B cell (primary cell): ENCODE measurements at regions of chr6 and their contacts with region 1.

Region 1: GRCh38 chr6:109187399-109188114 is 92.2 kb downstream of the CEP57L1 start:
- DNase-seq: peak; percentile 71
- ATAC-seq: peak; percentile 82
- H3K4me3 ChIP-seq: no peak overlapping the region
- H3K4me3 Mint-ChIP-seq: no peak overlapping the region
- H3K27ac ChIP-seq: no peak overlapping the region
- H3K27ac Mint-ChIP-seq: no peak overlapping the region
- H3K4me1 ChIP-seq: peaks cover 8 to 16% of the 10 kb centered on the region in 2 donors
- H3K4me1 Mint-ChIP-seq: peaks cover 9% of the 10 kb centered on the region
- H3K27me3 ChIP-seq: peaks cover 0 to 4% (median 0%) of the 10 kb centered on the region in 4 experiments
- H3K27me3 Mint-ChIP-seq: peaks cover 11% of the 10 kb centered on the region
- CTCF ChIP-seq: peak; percentile 97

Region 2: DNA sequence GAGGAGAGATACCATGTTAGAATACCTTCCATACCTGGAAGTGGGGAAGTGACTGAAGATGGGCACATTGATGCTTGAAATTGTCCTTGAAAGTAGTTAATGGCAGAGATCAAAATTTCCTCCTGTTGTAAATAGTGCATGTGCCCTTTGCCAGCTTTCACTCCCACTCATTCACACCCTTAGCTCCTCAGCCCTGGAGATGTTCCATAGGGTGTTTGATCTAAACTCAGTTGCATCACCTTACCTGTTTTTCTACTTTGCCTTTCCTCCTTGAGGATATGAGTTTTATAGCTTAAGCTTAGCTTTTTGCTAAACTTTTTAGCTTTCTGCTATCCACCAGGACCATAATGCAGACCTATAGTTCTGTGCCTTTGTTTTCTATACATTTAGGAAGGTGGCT is 23.2 kb before region 1 on chr6:
- CTCF ChIA-PET with region 1: interaction called, 12 read pairs
- POLR2A ChIA-PET with region 1: no interaction called
- intact Hi-C with region 1: no loop called
- DNase-seq: no peak
- ATAC-seq: no peak
- H3K4me3 ChIP-seq: no peak overlapping the region
- H3K4me3 Mint-ChIP-seq: no peak overlapping the region
- H3K27ac ChIP-seq: no peak overlapping the region
- H3K27ac Mint-ChIP-seq: no peak overlapping the region
- H3K4me1 ChIP-seq: no peaks in the 10 kb centered on the region
- H3K4me1 Mint-ChIP-seq: no peaks in the 10 kb centered on the region
- H3K27me3 ChIP-seq: no peaks in the 10 kb centered on the region
- H3K27me3 Mint-ChIP-seq: no peaks in the 10 kb centered on the region
- CTCF ChIP-seq: no peak

Region 3: GRCh38 chr6:109526905-109527628 is 339.5 kb after region 1 on chr6:
- CTCF ChIA-PET with region 1: no interaction called
- POLR2A ChIA-PET with region 1: no interaction called
- intact Hi-C with region 1: loop called (anchors 2 kb)
- DNase-seq: peak; percentile 74
- ATAC-seq: peak; percentile 66
- H3K4me3 ChIP-seq: no peak overlapping the region
- H3K4me3 Mint-ChIP-seq: no peak overlapping the region
- H3K27ac ChIP-seq: no peak overlapping the region
- H3K27ac Mint-ChIP-seq: no peak overlapping the region
- H3K4me1 ChIP-seq: peaks cover 0 to 3% of the 10 kb centered on the region in 2 donors
- H3K4me1 Mint-ChIP-seq: peaks cover 4% of the 10 kb centered on the region
- H3K27me3 ChIP-seq: no peaks in the 10 kb centered on the region
- H3K27me3 Mint-ChIP-seq: no peaks in the 10 kb centered on the region
- CTCF ChIP-seq: peak; percentile 74

Region 4: DNA sequence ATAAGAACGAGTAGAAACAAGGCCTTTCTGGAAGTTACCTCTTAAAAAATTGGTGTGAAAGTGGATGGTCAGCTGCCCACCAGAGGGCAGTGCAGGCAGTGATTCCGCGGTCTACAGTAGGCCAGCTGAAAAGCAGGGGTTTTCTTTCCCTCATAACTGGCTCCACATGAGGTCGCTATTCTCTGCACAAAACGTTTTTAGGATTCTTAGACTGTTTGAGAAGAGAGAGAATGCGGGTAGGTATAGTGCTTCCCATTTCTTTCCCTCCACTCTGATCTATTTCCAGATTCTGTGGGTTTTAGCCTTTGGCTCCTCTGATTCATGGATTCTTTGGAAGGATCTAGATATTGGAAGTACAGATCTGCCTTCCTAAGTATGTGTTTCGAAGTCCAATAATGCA is 517.7 kb after region 1 on chr6:
- CTCF ChIA-PET with region 1: interaction called, 12 read pairs
- POLR2A ChIA-PET with region 1: no interaction called
- intact Hi-C with region 1: loop called (anchors 5 kb)
- DNase-seq: peak; percentile 89
- ATAC-seq: peak; percentile 99
- H3K4me3 ChIP-seq: no peak overlapping the region
- H3K4me3 Mint-ChIP-seq: no peak overlapping the region
- H3K27ac ChIP-seq: no peak overlapping the region
- H3K27ac Mint-ChIP-seq: no peak overlapping the region
- H3K4me1 ChIP-seq: peaks cover 24 to 25% of the 10 kb centered on the region in 2 donors
- H3K4me1 Mint-ChIP-seq: peaks cover 65% of the 10 kb centered on the region
- H3K27me3 ChIP-seq: no peaks in the 10 kb centered on the region
- H3K27me3 Mint-ChIP-seq: no peaks in the 10 kb centered on the region
- CTCF ChIP-seq: peak; percentile 98

Region 5: GRCh38 chr6:110389689-110390382 is 1202.3 kb after region 1 on chr6:
- CTCF ChIA-PET with region 1: interaction called, 5 read pairs
- POLR2A ChIA-PET with region 1: no interaction called
- intact Hi-C with region 1: loop called (anchors 2 kb)
- DNase-seq: no peak
- ATAC-seq: no peak
- H3K4me3 ChIP-seq: no peak overlapping the region
- H3K4me3 Mint-ChIP-seq: no peak overlapping the region
- H3K27ac ChIP-seq: no peak overlapping the region
- H3K27ac Mint-ChIP-seq: no peak overlapping the region
- H3K4me1 ChIP-seq: no peaks in the 10 kb centered on the region
- H3K4me1 Mint-ChIP-seq: no peaks in the 10 kb centered on the region
- H3K27me3 ChIP-seq: no peaks in the 10 kb centered on the region
- H3K27me3 Mint-ChIP-seq: no peaks in the 10 kb centered on the region
- CTCF ChIP-seq: no peak